ENCODE measurements at regions of chr1 and their contacts with region 1.

Region 1: GRCh38 chr1:224851210-224851847 is 78.1 kb upstream of the DNAH14 start:
- DNase-seq: peak in 1 of 2 experiments; percentile 91
- H3K4me3 ChIP-seq: no peak overlapping the region
- H3K27ac ChIP-seq: no peak overlapping the region
- H3K4me1 ChIP-seq: peaks cover 3 to 8% (median 5%) of the 10 kb centered on the region in 4 experiments
- H3K27me3 ChIP-seq: no peaks in the 10 kb centered on the region
- CTCF ChIP-seq: peak; percentile 81 to 93 (median 87)
- EP300 ChIP-seq: no peak
- POLR2A ChIP-seq: no peak
- RAD21 ChIP-seq: peak; percentile 80 to 83

Region 2: DNA sequence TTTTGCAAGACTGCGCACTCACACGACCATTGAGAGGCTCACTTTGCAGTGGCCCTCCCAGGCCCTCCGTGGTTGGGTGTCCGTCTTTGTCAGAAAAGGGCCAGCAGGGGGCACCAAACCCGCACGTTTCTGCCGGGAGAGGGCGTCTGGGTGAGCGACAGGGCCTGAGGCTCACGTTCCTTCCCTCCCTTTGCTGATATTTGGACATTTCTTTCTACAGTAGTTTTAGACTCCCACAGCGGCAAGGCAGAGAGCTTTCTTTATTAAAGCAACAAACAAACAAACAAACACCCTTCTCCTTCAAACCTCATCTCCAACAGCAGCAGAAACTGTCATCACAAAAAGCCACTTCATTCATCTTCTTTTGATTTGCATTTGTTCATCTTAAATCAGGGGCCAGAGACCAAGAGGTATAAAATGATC is 337.5 kb before region 1 on chr1:
- CTCF ChIA-PET with region 1: interaction called, 103 read pairs
- POLR2A ChIA-PET with region 1: no interaction called
- DNase-seq: peak in 1 of 2 experiments; percentile 98
- H3K4me3 ChIP-seq: no peak overlapping the region
- H3K27ac ChIP-seq: no peak overlapping the region
- H3K4me1 ChIP-seq: peaks cover 0 to 2% (median 0%) of the 10 kb centered on the region in 4 experiments; a peak in 2 of 7 replicates
- H3K27me3 ChIP-seq: no peaks in the 10 kb centered on the region
- CTCF ChIP-seq: peak; percentile 84 to 99 (median 96)
- EP300 ChIP-seq: no peak
- POLR2A ChIP-seq: no peak
- RAD21 ChIP-seq: peak; percentile 97 to 98

Region 3: DNA sequence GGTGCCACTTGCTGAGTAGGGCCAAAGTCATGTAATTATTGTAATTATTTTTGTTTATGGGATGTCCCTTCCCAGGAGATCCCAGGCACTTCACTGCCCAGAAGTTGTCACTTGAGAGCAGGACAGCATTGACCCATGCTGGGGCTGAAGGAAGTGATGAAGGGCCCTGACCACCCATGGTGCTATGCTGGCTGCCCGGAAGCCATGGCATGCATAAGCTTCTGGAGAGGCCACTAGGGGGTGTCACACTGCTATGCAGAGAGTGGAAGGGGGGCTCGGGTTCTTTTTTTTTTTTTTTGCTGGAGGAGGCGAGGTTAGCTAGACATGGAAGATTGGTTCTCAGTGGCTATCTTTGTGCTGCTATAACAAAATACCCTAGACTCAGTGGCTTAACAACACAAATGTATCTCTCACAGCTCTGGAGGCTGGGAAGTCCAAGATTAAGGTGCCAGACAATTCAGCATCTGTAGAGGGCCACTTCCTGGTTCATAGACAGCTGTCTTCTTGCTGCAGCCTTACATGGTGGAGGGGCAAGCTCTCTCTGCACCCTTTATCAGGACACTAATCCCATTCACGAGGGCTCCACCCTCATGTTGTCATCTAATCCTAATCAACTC is 150.3 kb before region 1 on chr1:
- CTCF ChIA-PET with region 1: interaction called, 236 read pairs
- POLR2A ChIA-PET with region 1: interaction called, 3 read pairs
- DNase-seq: peak in 1 of 2 experiments; percentile 66
- H3K4me3 ChIP-seq: no peak overlapping the region
- H3K27ac ChIP-seq: no peak overlapping the region
- H3K4me1 ChIP-seq: peaks cover 0 to 8% (median 7%) of the 10 kb centered on the region in 4 experiments; a peak in 6 of 7 replicates
- H3K27me3 ChIP-seq: no peaks in the 10 kb centered on the region
- CTCF ChIP-seq: peak; percentile 64 to 83 (median 74)
- EP300 ChIP-seq: no peak
- POLR2A ChIP-seq: no peak
- RAD21 ChIP-seq: peak; percentile 78 to 88

Region 4: DNA sequence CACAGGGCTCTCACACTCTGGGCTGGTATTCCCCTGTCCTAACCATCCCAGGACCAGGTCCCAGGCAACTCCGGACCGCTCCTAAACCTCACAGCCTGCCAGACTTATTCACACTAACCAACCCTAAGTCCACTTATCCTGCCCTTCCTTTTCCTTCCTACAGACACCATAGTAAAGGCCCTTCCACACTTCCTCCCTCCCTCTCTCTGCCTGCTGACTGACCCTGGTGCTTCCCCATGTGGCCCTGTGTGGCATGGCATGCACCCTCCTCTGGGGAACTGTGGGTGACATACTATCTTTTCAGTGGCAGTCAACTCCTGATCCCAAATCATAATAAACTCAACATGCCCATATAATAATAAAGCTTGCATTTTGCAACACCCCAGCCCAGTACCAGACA is 77.0 kb before region 1 on chr1:
- CTCF ChIA-PET with region 1: interaction called, 33 read pairs
- POLR2A ChIA-PET with region 1: no interaction called
- DNase-seq: no peak
- H3K4me3 ChIP-seq: no peak overlapping the region
- H3K27ac ChIP-seq: no peak overlapping the region
- H3K4me1 ChIP-seq: peaks cover 0 to 6% (median 3%) of the 10 kb centered on the region in 4 experiments; a peak in 3 of 7 replicates
- H3K27me3 ChIP-seq: no peaks in the 10 kb centered on the region; a peak in 1 of 7 replicates
- CTCF ChIP-seq: peak; percentile 63 to 78 (median 73)
- EP300 ChIP-seq: no peak
- POLR2A ChIP-seq: no peak
- RAD21 ChIP-seq: peak; percentile 54 to 71

Region 5: GRCh38 chr1:224828691-224829090 is 22.6 kb before region 1 on chr1:
- CTCF ChIA-PET with region 1: interaction called, 93 read pairs
- POLR2A ChIA-PET with region 1: no interaction called
- DNase-seq: no peak
- H3K4me3 ChIP-seq: no peak overlapping the region
- H3K27ac ChIP-seq: no peak overlapping the region
- H3K4me1 ChIP-seq: no peaks in the 10 kb centered on the region
- H3K27me3 ChIP-seq: no peaks in the 10 kb centered on the region
- CTCF ChIP-seq: no peak
- EP300 ChIP-seq: no peak
- POLR2A ChIP-seq: no peak
- RAD21 ChIP-seq: no peak

Region 6: GRCh38 chr1:224884361-224884801 is 33.1 kb after region 1 on chr1:
- CTCF ChIA-PET with region 1: interaction called, 25 read pairs
- POLR2A ChIA-PET with region 1: no interaction called
- DNase-seq: no peak
- H3K4me3 ChIP-seq: no peak overlapping the region
- H3K27ac ChIP-seq: no peak overlapping the region
- H3K4me1 ChIP-seq: peaks cover 6 to 17% (median 14%) of the 10 kb centered on the region in 4 experiments; a peak in 5 of 7 replicates
- H3K27me3 ChIP-seq: no peaks in the 10 kb centered on the region
- CTCF ChIP-seq: no peak
- EP300 ChIP-seq: no peak
- POLR2A ChIP-seq: no peak
- RAD21 ChIP-seq: no peak

Region 7: GRCh38 chr1:225146478-225146877 is 295.1 kb after region 1 on chr1:
- CTCF ChIA-PET with region 1: no interaction called
- POLR2A ChIA-PET with region 1: no interaction called
- DNase-seq: peak in 1 of 2 experiments; percentile 7
- H3K4me3 ChIP-seq: no peak overlapping the region
- H3K27ac ChIP-seq: no peak overlapping the region
- H3K4me1 ChIP-seq: peaks cover 0 to 2% (median 1%) of the 10 kb centered on the region in 4 experiments; a peak in 1 of 7 replicates
- H3K27me3 ChIP-seq: no peaks in the 10 kb centered on the region
- CTCF ChIP-seq: no peak
- EP300 ChIP-seq: no peak
- POLR2A ChIP-seq: no peak
- RAD21 ChIP-seq: no peak